Activated naive CD8-positive, alpha-beta T cell treated with anti-CD3 and anti-CD28 coated beads, Interleukin-2, amount 10 ng/mL, durations not matched to agents 7 days and 5 days (primary cell): ENCODE measurements at regions of chr9 and their contacts with region 1.

Region 1: DNA sequence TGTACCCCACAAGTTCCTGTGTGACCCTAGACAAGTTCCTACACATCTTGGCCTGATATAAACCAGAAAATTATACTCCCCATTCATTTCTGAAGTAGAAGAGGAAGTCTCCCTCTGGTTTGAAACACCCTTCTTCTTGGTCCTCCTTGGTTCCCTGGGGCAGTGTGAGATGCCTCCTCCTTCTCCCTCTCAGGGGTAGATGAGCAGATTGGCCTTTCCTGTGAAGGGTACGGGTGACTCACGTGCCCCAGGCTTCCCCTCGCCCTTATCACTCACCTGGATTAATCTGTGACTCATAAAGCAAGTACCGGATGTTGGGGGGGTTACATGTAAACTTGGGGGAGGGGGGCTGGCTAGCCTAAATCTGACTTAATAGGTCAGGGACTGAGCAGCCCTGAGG is 11.1 kb upstream of the AQP3 start:
- DNase-seq: no peak
- ATAC-seq: peak; percentile 68
- H3K4me3 Mint-ChIP-seq: peak overlapping the region; percentile 54
- H3K27ac Mint-ChIP-seq: peak overlapping the region; percentile 84
- H3K4me1 Mint-ChIP-seq: peaks cover 43% of the 10 kb centered on the region
- H3K27me3 Mint-ChIP-seq: no peaks in the 10 kb centered on the region

Region 2: DNA sequence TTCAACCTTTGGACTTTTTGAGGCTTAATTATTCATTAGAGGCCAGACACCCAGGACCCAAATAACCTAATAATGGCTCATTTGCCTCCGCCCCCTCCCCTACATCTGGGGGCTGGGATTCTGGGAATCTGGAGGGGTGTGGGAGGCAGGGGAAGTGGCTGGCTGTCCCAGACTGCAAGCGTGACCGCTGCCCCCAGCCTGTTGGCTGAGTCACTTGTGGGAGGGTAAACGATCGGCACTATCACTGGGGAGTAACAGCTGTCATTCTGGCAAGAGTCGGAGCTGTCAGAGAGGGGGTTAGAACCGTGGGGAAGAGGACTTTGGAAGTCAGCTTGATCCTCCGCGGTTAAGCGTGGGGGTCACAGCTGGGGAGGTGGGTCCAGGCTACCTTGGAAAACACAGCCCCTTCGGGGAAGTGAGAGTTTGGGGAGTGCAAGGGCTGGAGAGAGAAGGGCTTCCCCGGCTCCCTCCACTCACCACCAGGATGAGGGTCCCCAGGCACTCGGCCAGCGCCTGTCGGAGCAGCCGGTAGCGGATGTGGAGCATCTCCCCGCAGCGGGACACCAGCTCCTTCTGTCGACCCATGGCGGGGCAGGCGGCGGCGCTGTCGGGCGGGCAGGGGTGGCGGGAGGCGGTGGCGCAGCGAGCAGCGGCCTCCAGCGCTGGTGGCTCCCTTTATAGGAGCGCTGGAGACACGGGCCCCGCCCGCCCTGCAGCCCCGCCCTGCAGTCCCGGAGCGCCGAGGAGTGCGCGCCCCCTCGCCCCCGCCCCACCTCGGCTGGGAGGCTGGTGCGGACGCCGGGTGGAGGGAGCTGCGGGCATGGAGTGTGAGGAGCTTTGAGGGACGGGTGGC is 11.3 kb before region 1 on chr9 and contains the start of gene AQP3:
- POLR2A ChIA-PET with region 1: interaction called, 13 read pairs
- DNase-seq: peak; percentile 81
- ATAC-seq: peak; percentile 74
- H3K4me3 Mint-ChIP-seq: peak within 1 kb of the TSS; percentile 91
- H3K27ac Mint-ChIP-seq: peak within 1 kb of the TSS; percentile 95
- H3K4me1 Mint-ChIP-seq: peaks cover 35% of the 10 kb centered on the region
- H3K27me3 Mint-ChIP-seq: no peaks in the 10 kb centered on the region
- total RNA-seq, gene AQP3: 29.1 to 32.0 TPM